B cell (primary cell): ENCODE measurements at regions of chr15 and their contacts with region 1.

Region 1: DNA sequence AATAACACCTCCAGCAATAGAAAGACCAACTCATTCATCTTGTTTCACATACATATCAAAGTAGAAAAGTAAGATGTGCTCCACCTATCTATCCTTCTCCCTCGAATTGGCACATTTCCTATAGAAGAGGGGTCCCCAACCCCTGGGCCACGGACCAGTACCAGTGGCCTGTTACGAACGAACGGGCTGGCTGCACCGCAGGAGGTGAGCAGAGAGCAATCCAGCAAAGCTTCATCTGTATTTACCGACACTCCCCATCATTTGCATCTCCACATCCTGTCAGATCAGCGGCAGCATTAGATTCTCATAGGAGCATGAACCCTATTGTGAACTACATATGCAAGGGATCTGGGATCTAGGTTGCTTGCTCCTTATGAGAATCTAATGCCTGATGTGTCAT is 95.0 kb upstream of the CGNL1 start:
- DNase-seq: peak; percentile 73
- ATAC-seq: peak; percentile 63
- H3K4me3 ChIP-seq: peak overlapping the region; percentile 18 to 64 (median 55)
- H3K4me3 Mint-ChIP-seq: peak overlapping the region; percentile 91
- H3K27ac ChIP-seq: peak overlapping the region; percentile 95
- H3K27ac Mint-ChIP-seq: peak overlapping the region; percentile 94
- H3K4me1 ChIP-seq: peaks cover 71 to 72% of the 10 kb centered on the region in 2 donors
- H3K4me1 Mint-ChIP-seq: peaks cover 75% of the 10 kb centered on the region
- H3K27me3 ChIP-seq: no peaks in the 10 kb centered on the region
- H3K27me3 Mint-ChIP-seq: no peaks in the 10 kb centered on the region
- CTCF ChIP-seq: no peak

Region 2: DNA sequence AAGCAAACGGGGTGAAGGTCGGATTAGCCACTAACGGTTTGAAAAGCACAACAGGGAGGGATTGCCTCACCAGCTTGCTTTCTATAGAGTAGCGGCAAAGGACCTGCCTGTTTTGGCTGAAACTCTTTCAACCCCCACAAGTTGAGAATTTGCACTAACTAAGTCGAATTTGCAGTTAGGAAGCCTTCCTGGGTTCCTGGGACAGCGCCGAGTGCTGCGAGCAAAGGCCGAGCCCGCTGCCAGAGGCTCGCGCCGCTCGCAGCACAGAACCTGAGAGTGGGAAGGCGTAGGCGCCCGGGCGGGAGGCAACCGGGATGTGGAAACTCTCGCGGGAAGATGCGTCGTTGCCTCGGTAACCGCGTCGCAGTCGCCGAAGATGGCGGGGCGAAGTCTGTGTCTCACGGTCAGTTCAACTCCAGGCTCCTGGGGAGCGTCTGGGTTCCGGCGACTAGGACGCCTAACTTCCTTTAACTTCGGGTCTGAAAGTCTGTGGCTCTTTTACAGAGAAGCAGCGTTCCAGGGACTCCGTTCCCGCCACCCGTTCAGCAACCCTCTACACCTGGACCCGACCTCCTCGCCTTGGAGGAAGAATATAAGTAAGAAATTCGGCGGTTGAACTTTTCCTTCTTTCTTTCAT is 916.1 kb before region 1 on chr15 and contains the start of gene TEX9:
- CTCF ChIA-PET with region 1: no interaction called
- POLR2A ChIA-PET with region 1: no interaction called
- intact Hi-C with region 1: loop called (anchors 10 kb)
- DNase-seq: peak; percentile 86
- ATAC-seq: peak; percentile 88
- H3K4me3 ChIP-seq: peak within 1 kb of the TSS; percentile 60 to 71 (median 68)
- H3K4me3 Mint-ChIP-seq: peak within 1 kb of the TSS; percentile 95
- H3K27ac ChIP-seq: peak within 1 kb of the TSS; percentile 1 to 71
- H3K27ac Mint-ChIP-seq: peak within 1 kb of the TSS; percentile 90
- H3K4me1 ChIP-seq: peaks cover 15% of the 10 kb centered on the region in 2 donors
- H3K4me1 Mint-ChIP-seq: peaks cover 36% of the 10 kb centered on the region
- H3K27me3 ChIP-seq: peaks cover 0 to 8% (median 5%) of the 10 kb centered on the region in 4 experiments
- H3K27me3 Mint-ChIP-seq: no peaks in the 10 kb centered on the region
- CTCF ChIP-seq: no peak
- total RNA-seq, gene TEX9: 41.8 and 43.1 TPM in 2 replicates

Region 3: DNA sequence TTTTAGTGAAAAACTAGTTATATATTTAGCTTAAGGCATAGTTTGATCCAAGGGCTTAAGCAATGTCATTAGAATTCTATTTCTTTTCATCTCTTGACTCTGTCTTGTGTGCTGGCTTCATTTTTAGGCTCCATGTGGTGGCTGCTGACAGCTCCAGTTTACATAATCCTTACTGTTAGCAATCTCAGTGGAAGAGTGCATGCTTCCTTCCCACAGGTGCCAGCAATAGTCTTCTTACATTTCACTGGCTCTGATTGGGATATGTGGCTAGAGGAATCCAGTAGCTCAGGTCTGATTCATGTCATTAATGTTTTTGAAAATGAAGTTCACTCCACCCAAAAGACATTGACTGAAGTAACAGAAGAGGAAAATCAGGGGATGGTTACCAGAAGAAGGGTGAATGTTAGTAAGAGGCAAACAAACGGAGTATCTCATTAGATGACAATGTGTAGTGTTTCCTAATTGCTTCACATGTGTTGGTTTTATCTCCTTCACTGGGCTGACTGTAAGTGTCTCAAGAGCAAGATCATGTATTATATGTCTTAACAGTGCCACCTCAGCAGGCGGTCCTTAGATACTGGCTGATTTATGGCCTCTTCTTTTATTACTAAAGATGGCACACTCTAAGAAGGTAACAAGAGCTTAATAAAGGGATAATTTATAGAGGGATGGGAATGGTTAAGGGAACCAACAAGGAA is 388.5 kb before region 1 on chr15:
- CTCF ChIA-PET with region 1: no interaction called
- POLR2A ChIA-PET with region 1: no interaction called
- intact Hi-C with region 1: no loop called
- DNase-seq: no peak
- ATAC-seq: no peak
- H3K4me3 ChIP-seq: no peak overlapping the region
- H3K4me3 Mint-ChIP-seq: no peak overlapping the region
- H3K27ac ChIP-seq: no peak overlapping the region
- H3K27ac Mint-ChIP-seq: no peak overlapping the region
- H3K4me1 ChIP-seq: peaks cover 7 to 8% of the 10 kb centered on the region in 2 donors
- H3K4me1 Mint-ChIP-seq: peaks cover 13% of the 10 kb centered on the region
- H3K27me3 ChIP-seq: no peaks in the 10 kb centered on the region
- H3K27me3 Mint-ChIP-seq: no peaks in the 10 kb centered on the region
- CTCF ChIP-seq: no peak

Region 4: GRCh38 chr15:56918046-56918938 is 363.0 kb before region 1 on chr15 and contains the start of gene TCF12:
- CTCF ChIA-PET with region 1: no interaction called
- POLR2A ChIA-PET with region 1: no interaction called
- intact Hi-C with region 1: loop called (anchors 5 kb)
- DNase-seq: peak; percentile 97
- ATAC-seq: peak; percentile 74
- H3K4me3 ChIP-seq: peak within 1 kb of the TSS; percentile 80 to 92 (median 89)
- H3K4me3 Mint-ChIP-seq: peak within 1 kb of the TSS; percentile 93
- H3K27ac ChIP-seq: peak within 1 kb of the TSS; percentile 79 to 86
- H3K27ac Mint-ChIP-seq: peak within 1 kb of the TSS; percentile 92
- H3K4me1 ChIP-seq: peaks cover 19 to 21% of the 10 kb centered on the region in 2 donors
- H3K4me1 Mint-ChIP-seq: peaks cover 32% of the 10 kb centered on the region
- H3K27me3 ChIP-seq: no peaks in the 10 kb centered on the region
- H3K27me3 Mint-ChIP-seq: no peaks in the 10 kb centered on the region
- CTCF ChIP-seq: peak; percentile 59
- total RNA-seq, gene TCF12: 131 TPM in 2 replicates

Region 5: GRCh38 chr15:57227899-57228298 is 53.4 kb before region 1 on chr15:
- CTCF ChIA-PET with region 1: no interaction called
- POLR2A ChIA-PET with region 1: no interaction called
- intact Hi-C with region 1: loop called (anchors 5 kb)
- DNase-seq: no peak
- ATAC-seq: no peak
- H3K4me3 ChIP-seq: no peak overlapping the region
- H3K4me3 Mint-ChIP-seq: no peak overlapping the region
- H3K27ac ChIP-seq: no peak overlapping the region
- H3K27ac Mint-ChIP-seq: no peak overlapping the region
- H3K4me1 ChIP-seq: no peaks in the 10 kb centered on the region
- H3K4me1 Mint-ChIP-seq: peaks cover 20% of the 10 kb centered on the region
- H3K27me3 ChIP-seq: no peaks in the 10 kb centered on the region
- H3K27me3 Mint-ChIP-seq: no peaks in the 10 kb centered on the region
- CTCF ChIP-seq: no peak

Region 6: DNA sequence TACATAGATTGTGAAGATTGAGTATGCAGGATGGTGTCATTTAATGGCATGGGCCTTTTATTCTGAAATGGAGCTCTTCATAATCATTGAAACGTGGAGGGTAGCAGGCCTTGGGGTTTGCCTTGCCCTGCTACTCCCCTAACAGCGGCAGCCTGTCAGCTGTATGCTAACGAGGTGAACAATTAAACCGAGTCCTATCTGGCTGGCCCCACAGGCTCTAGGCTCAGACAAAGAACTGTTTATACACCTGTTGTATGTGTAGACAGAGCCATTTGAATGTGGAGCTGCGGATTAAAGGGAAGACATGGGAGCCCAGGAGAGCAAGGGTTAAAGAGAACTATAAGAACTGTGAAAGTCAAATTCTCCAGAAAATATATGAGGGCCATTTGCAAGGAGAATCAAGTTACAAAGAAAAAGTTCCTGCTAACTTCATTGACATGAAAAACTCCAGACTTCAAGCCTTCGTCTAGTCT is 21.7 kb before region 1 on chr15:
- CTCF ChIA-PET with region 1: interaction called, 5 read pairs
- POLR2A ChIA-PET with region 1: interaction called, 5 read pairs
- intact Hi-C with region 1: loop called (anchors 2 kb)
- DNase-seq: peak; percentile 64
- ATAC-seq: peak; percentile 97
- H3K4me3 ChIP-seq: peak overlapping the region in 1 of 5 experiments; percentile 27
- H3K4me3 Mint-ChIP-seq: peak overlapping the region; percentile 62
- H3K27ac ChIP-seq: peak overlapping the region; percentile 32 to 71
- H3K27ac Mint-ChIP-seq: peak overlapping the region; percentile 60
- H3K4me1 ChIP-seq: peaks cover 7 to 15% of the 10 kb centered on the region in 2 donors
- H3K4me1 Mint-ChIP-seq: peaks cover 17% of the 10 kb centered on the region
- H3K27me3 ChIP-seq: no peaks in the 10 kb centered on the region
- H3K27me3 Mint-ChIP-seq: no peaks in the 10 kb centered on the region
- CTCF ChIP-seq: no peak

Region 7: DNA sequence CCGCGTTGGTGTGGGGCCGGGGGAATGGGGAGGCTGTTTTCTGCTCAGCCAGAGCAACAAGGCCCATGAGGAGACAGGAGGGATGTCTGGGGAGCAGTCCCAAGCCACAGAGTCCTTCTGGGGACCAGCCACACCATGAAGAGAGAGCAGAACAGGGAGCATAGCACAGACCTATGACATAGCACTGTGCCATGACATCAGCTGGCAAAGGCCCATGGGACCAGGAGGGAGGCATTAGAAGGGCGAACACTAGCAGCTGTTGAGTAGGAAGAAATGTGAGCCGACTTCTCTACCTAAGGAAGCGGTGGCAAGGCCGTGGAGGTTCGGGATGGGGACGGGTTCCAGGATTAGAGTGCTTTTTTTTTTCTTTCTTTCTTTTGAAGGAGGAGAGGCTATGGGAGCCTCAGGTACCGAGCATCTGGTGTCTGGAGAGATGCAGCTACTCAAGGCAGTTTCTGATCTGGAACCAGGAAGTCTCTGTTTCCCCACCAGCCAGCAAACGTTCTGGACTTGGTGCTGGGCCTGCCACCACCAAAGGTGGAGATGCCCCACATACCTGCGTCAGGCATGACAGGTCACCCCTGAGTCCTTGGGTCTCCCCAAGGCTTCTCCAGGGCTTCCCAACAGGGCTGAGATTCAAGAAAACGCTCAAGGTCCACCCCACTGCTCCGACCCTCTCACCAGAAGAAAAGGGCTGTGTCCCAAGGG is 17.7 kb after region 1 on chr15:
- CTCF ChIA-PET with region 1: interaction called, 11 read pairs
- POLR2A ChIA-PET with region 1: interaction called, 109 read pairs
- intact Hi-C with region 1: loop called (anchors 1 kb)
- DNase-seq: peak; percentile 62
- ATAC-seq: no peak
- H3K4me3 ChIP-seq: peak overlapping the region in 4 of 5 experiments; percentile 95 to 100 (median 97)
- H3K4me3 Mint-ChIP-seq: peak overlapping the region; percentile 99
- H3K27ac ChIP-seq: peak overlapping the region; percentile 96 to 99
- H3K27ac Mint-ChIP-seq: peak overlapping the region; percentile 98
- H3K4me1 ChIP-seq: peaks cover 43 to 50% of the 10 kb centered on the region in 2 donors
- H3K4me1 Mint-ChIP-seq: peaks cover 58% of the 10 kb centered on the region
- H3K27me3 ChIP-seq: no peaks in the 10 kb centered on the region
- H3K27me3 Mint-ChIP-seq: no peaks in the 10 kb centered on the region
- CTCF ChIP-seq: no peak